GM12878 (cell line): ENCODE measurements at regions of chr11 and their contacts with region 1.

Region 1: GRCh38 chr11:26551186-26551801 is 20.8 kb downstream of the MUC15 start:
- DNase-seq: no peak
- ATAC-seq: peak; percentile 55
- H3K4me3 ChIP-seq: no peak overlapping the region
- H3K27ac ChIP-seq: no peak overlapping the region
- H3K4me1 ChIP-seq: no peaks in the 10 kb centered on the region
- H3K27me3 ChIP-seq: no peaks in the 10 kb centered on the region
- CTCF ChIP-seq: peak in 2 of 3 experiments; percentile 19 to 35; a peak in 3 of 6 replicates
- EP300 ChIP-seq: no peak
- POLR2A ChIP-seq: no peak
- RAD21 ChIP-seq: peak; percentile 49; the same call in 1 of the 2 replicates

Region 2: GRCh38 chr11:26297189-26297975 is 253.9 kb before region 1 on chr11:
- CTCF ChIA-PET with region 1: interaction called, 40 read pairs
- POLR2A ChIA-PET with region 1: no interaction called
- RAD21 ChIA-PET with region 1: interaction called, 8 read pairs
- SMC1A ChIA-PET with region 1: interaction called, 8 read pairs
- in situ Hi-C with region 1: loop called (anchors 10 kb)
- intact Hi-C with region 1: loop called (anchors 1 kb)
- DNase-seq: no peak
- ATAC-seq: peak; percentile 92
- H3K4me3 ChIP-seq: no peak overlapping the region
- H3K27ac ChIP-seq: no peak overlapping the region
- H3K4me1 ChIP-seq: no peaks in the 10 kb centered on the region
- H3K27me3 ChIP-seq: no peaks in the 10 kb centered on the region
- CTCF ChIP-seq: peak; percentile 56 to 73 (median 67)
- EP300 ChIP-seq: no peak
- POLR2A ChIP-seq: no peak
- RAD21 ChIP-seq: peak; percentile 79

Region 3: GRCh38 chr11:26348756-26349155 is 202.5 kb before region 1 on chr11:
- CTCF ChIA-PET with region 1: no interaction called
- POLR2A ChIA-PET with region 1: no interaction called
- RAD21 ChIA-PET with region 1: no interaction called
- SMC1A ChIA-PET with region 1: no interaction called
- in situ Hi-C with region 1: no loop called
- intact Hi-C with region 1: no loop called
- DNase-seq: no peak
- ATAC-seq: no peak
- H3K4me3 ChIP-seq: no peak overlapping the region
- H3K27ac ChIP-seq: no peak overlapping the region
- H3K4me1 ChIP-seq: no peaks in the 10 kb centered on the region
- H3K27me3 ChIP-seq: no peaks in the 10 kb centered on the region
- CTCF ChIP-seq: no peak
- EP300 ChIP-seq: no peak
- POLR2A ChIP-seq: no peak
- RAD21 ChIP-seq: no peak

Region 4: DNA sequence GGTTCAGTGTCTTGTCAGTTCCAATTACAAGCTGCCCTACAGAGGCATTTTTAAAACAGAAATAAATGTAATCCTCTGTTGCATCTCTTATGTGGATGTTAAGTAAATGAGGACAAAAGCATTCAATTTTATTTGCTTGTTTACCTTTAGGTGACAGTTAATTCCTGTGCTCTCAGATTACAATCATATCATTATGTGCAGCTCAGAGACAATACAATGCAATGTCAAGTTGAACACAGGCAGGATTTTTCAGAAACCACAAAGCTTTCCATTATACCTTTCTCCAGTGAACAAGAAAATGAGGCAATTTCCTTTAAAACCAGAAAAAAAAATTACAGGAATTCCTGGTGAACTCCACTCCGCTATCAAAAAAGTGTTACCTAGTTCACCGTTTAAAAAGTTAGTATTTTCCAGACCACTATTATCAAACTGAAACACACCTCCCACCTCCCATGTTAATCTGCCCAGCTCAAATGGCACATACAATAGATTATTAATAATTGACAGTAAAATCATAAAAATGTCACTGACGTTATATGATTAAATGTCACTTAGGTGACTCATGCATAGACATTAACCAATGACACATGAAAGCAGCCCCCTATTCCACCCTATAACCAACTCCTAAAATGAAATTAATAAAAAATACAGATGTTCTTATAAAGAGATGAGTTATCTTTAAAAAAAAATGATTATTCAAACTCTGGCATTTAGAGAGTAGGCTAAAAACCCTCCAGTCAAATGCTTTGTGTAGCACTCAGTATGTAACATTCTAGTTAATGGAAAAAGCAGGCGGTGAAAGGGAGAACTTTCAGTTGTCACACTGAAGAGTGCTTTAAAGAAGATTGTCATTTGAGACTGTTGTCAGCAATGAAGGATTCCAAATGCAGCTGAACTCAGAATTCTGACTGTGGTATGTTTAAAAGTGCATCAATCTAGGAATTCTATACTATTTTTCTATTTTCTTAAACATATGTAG is 77.8 kb before region 1 on chr11:
- CTCF ChIA-PET with region 1: interaction called, 25 read pairs
- POLR2A ChIA-PET with region 1: no interaction called
- RAD21 ChIA-PET with region 1: interaction called, 10 read pairs
- SMC1A ChIA-PET with region 1: interaction called, 19 read pairs
- in situ Hi-C with region 1: no loop called
- intact Hi-C with region 1: loop called (anchors 2 kb)
- DNase-seq: no peak
- ATAC-seq: peak; percentile 39
- H3K4me3 ChIP-seq: no peak overlapping the region
- H3K27ac ChIP-seq: no peak overlapping the region
- H3K4me1 ChIP-seq: no peaks in the 10 kb centered on the region
- H3K27me3 ChIP-seq: no peaks in the 10 kb centered on the region
- CTCF ChIP-seq: no peak
- EP300 ChIP-seq: no peak
- POLR2A ChIP-seq: no peak
- RAD21 ChIP-seq: no peak

Region 5: DNA sequence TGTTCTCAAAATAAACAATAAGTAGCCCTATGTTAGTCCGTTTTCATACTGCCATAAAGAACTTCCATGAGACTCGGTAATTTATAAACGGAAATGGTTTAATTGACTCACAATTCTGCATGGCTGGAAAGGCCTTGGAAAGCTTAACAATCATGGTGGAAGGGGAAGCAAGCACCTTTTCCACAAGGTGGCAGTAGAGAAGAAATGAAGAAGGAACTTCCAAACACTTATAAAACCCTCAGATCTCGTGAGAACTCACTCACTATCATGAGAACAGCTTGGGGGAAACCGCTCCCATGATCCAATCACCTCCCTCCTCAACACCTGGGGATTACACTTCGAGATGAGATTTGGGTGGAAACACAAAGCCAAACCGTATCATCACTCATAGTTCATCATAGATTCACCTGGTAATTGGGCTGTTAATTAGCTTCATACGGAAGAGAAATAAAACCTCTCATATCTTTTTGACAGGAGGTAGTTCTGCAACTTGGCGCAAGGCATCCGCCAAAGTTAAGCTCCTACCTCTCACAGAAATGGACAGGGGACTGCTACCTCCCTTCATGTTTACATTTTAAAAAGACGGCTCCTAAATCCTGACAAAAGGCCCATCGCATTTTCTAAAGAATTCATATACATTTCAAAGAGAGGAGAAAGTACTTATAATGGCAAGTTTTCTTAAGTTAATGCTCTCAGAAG is 28.2 kb before region 1 on chr11:
- CTCF ChIA-PET with region 1: interaction called, 12 read pairs
- POLR2A ChIA-PET with region 1: no interaction called
- RAD21 ChIA-PET with region 1: interaction called, 4 read pairs
- SMC1A ChIA-PET with region 1: interaction called, 13 read pairs
- in situ Hi-C with region 1: no loop called
- intact Hi-C with region 1: no loop called
- DNase-seq: no peak
- ATAC-seq: peak; percentile 64
- H3K4me3 ChIP-seq: no peak overlapping the region
- H3K27ac ChIP-seq: no peak overlapping the region
- H3K4me1 ChIP-seq: no peaks in the 10 kb centered on the region
- H3K27me3 ChIP-seq: no peaks in the 10 kb centered on the region
- CTCF ChIP-seq: peak; percentile 30 to 40 (median 32); a peak in 4 of 6 replicates
- EP300 ChIP-seq: no peak
- POLR2A ChIP-seq: no peak
- RAD21 ChIP-seq: peak; percentile 33

Region 6: DNA sequence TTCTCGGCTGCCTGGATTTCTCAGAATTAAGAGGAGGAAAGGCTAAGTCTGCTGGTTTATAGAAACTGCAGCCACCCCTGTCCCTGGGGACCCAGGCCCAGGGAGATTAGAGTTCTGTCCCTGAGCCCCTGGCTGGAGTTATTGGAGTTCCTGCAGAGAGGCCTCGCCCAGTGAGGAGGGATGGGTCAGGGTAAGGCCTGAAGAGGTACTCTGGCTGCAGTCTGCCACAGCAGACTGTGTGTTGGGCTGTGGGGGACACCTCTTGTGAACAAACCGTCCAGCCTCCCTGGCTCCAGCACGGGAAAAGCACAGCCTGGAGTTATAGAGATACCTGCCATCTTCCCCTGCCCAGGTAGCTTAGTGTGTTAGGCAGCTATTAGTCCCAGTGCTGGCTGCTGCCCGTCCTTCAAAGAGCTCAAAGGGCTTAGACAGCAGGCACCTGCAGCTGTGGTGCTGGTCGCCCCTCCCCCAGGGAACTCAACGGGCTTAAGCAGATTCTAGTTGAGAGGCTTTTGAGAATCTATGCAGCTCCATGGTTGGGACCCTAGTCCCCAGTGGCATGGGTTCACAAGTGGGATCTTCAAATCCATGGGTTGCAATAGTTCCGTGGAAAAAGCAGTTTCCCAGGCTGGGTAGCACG is 57.3 kb after region 1 on chr11:
- CTCF ChIA-PET with region 1: interaction called, 3 read pairs
- POLR2A ChIA-PET with region 1: interaction called, 3 read pairs
- RAD21 ChIA-PET with region 1: interaction called, 7 read pairs
- SMC1A ChIA-PET with region 1: interaction called, 20 read pairs
- in situ Hi-C with region 1: no loop called
- intact Hi-C with region 1: no loop called
- DNase-seq: no peak
- ATAC-seq: peak; percentile 66
- H3K4me3 ChIP-seq: no peak overlapping the region
- H3K27ac ChIP-seq: peak overlapping the region; percentile 58
- H3K4me1 ChIP-seq: peaks cover 4% of the 10 kb centered on the region; the same call in 1 of the 2 replicates
- H3K27me3 ChIP-seq: no peaks in the 10 kb centered on the region
- CTCF ChIP-seq: no peak
- EP300 ChIP-seq: no peak
- POLR2A ChIP-seq: no peak
- RAD21 ChIP-seq: no peak

Region 7: GRCh38 chr11:26753723-26754504 is 202.6 kb after region 1 on chr11:
- CTCF ChIA-PET with region 1: no interaction called
- POLR2A ChIA-PET with region 1: no interaction called
- RAD21 ChIA-PET with region 1: no interaction called
- SMC1A ChIA-PET with region 1: no interaction called
- in situ Hi-C with region 1: no loop called
- intact Hi-C with region 1: no loop called
- DNase-seq: no peak
- ATAC-seq: peak; percentile 94
- H3K4me3 ChIP-seq: no peak overlapping the region
- H3K27ac ChIP-seq: no peak overlapping the region
- H3K4me1 ChIP-seq: no peaks in the 10 kb centered on the region
- H3K27me3 ChIP-seq: 0 out of 4 replicates have a peak, but pooled peaks cover 0 to 2% of the 10 kb centered on the region in 2 experiments
- CTCF ChIP-seq: peak; percentile 34 to 56 (median 51); a peak in 4 of 6 replicates
- EP300 ChIP-seq: no peak
- POLR2A ChIP-seq: no peak
- RAD21 ChIP-seq: peak; percentile 68

Region 8: DNA sequence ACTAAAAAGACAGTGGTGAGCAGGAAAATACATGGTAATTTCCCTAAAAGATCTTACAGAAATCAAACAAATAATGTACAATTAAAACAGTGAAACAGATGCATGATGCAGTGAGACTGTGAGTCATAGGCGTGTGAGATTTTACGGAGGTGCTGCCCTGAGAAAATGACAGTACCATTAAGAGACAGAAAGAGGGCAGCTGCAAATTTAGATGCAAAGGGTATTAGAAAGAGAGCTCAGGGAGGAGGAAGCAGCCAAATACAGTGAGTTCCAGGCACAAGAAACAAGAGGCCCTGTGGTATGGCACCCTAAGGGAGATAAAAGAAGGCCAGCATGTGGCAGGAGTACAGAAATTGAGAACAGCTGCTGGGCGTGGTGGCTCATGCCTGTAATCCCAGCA is 354.1 kb after region 1 on chr11:
- CTCF ChIA-PET with region 1: no interaction called
- POLR2A ChIA-PET with region 1: no interaction called
- RAD21 ChIA-PET with region 1: no interaction called
- SMC1A ChIA-PET with region 1: no interaction called
- in situ Hi-C with region 1: no loop called
- intact Hi-C with region 1: no loop called
- DNase-seq: no peak
- ATAC-seq: no peak
- H3K4me3 ChIP-seq: no peak overlapping the region
- H3K27ac ChIP-seq: no peak overlapping the region
- H3K4me1 ChIP-seq: no peaks in the 10 kb centered on the region
- H3K27me3 ChIP-seq: no peaks in the 10 kb centered on the region
- CTCF ChIP-seq: no peak
- EP300 ChIP-seq: no peak
- POLR2A ChIP-seq: no peak
- RAD21 ChIP-seq: no peak